ENCODE measurements at regions of chr10 and their contacts with region 1.

Region 1: GRCh38 chr10:24503461-24504320 is 220.0 kb downstream of the ARHGAP21 start:
- DNase-seq: peak in 3 of 6 donors; percentile 42 to 70 (median 44)
- ATAC-seq: peak; percentile 76 to 88 (median 86)
- H3K4me3 ChIP-seq: no peak overlapping the region
- H3K27ac ChIP-seq: peak overlapping the region in 1 of 4 donors; percentile 24
- H3K4me1 ChIP-seq: no peaks in the 10 kb centered on the region
- H3K27me3 ChIP-seq: no peaks in the 10 kb centered on the region
- CTCF ChIP-seq: peak in 3 of 4 donors; percentile 27 to 45 (median 33)

Region 2: DNA sequence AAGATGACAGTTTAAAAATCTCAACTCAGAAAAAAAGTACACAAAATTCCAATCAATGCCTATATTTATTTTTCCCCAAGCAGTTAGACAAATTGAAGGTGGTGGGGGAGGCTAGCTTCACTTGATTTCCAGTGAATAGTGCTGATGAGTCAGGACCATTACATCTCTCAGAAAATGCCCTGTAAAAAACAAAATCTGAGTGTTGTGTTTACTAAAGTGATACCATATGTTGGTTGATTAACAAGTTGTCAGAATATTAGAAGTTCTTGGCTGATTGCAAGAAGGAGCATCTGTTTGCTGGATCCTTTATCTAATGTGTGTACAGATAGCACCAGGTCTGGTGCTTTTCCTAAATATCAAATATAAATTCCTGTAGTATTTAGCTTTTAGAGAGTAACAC is 326.1 kb before region 1 on chr10:
- intact Hi-C with region 1: no loop called
- DNase-seq: no peak
- ATAC-seq: no peak
- H3K4me3 ChIP-seq: no peak overlapping the region
- H3K27ac ChIP-seq: no peak overlapping the region
- H3K4me1 ChIP-seq: no peaks in the 10 kb centered on the region
- H3K27me3 ChIP-seq: no peaks in the 10 kb centered on the region
- CTCF ChIP-seq: no peak

Region 3: GRCh38 chr10:24383681-24384106 is 120.0 kb before region 1 on chr10:
- intact Hi-C with region 1: loop called in 1 of 3 experiments (anchors 10 kb)
- DNase-seq: peak; percentile 91 to 96 (median 96)
- ATAC-seq: peak; percentile 92 to 97 (median 97)
- H3K4me3 ChIP-seq: no peak overlapping the region
- H3K27ac ChIP-seq: peak overlapping the region; percentile 74 to 96 (median 82)
- H3K4me1 ChIP-seq: peaks cover 0 to 14% (median 7%) of the 10 kb centered on the region in 3 donors
- H3K27me3 ChIP-seq: no peaks in the 10 kb centered on the region
- CTCF ChIP-seq: peak; percentile 37 to 58 (median 47)